ENCODE measurements at regions of chr18 and their contacts with region 1.

Region 1: DNA sequence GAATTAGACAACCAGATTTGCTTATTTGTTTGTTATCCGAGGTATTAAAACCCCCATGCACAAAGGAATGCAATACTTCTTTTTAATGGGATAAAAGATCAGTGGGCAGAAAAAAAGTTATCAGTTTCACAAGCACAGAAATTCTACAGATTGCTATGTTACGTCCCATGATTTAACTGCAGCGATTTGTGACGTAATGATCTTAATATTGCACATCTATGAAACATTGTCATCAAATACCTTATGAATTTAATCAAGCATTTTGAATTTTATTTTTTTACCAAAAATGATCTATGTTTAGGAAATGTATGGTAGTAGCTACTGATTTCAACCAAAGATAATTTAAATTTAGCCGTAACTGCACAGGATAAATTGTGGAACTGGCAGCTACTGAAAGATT is 138.9 kb downstream of the FHOD3 start:
- DNase-seq: no peak
- H3K4me3 ChIP-seq: no peak overlapping the region
- CTCF ChIP-seq: no peak

Region 2: DNA sequence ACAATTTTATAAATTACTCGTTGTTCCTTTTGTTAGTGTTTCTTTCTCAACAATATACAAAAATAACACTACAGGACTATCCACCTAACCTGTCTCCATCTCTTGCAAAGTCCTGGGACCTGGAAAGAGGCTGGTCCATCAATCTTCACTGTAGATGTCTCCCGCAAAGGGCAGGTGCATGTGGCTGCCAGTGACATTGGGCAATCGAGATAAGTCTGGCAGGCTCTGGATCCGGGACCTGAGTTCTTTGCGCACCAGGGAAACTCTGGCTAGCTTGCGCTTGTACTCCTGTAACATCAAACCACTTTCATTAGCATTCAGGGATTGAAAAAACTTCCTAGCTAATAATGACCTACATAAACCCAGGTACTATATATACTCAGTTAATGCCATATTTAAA is 443.4 kb before region 1 on chr18:
- CTCF ChIA-PET with region 1: no interaction called
- POLR2A ChIA-PET with region 1: no interaction called
- DNase-seq: no peak
- H3K4me3 ChIP-seq: no peak overlapping the region
- CTCF ChIP-seq: no peak

Region 3: DNA sequence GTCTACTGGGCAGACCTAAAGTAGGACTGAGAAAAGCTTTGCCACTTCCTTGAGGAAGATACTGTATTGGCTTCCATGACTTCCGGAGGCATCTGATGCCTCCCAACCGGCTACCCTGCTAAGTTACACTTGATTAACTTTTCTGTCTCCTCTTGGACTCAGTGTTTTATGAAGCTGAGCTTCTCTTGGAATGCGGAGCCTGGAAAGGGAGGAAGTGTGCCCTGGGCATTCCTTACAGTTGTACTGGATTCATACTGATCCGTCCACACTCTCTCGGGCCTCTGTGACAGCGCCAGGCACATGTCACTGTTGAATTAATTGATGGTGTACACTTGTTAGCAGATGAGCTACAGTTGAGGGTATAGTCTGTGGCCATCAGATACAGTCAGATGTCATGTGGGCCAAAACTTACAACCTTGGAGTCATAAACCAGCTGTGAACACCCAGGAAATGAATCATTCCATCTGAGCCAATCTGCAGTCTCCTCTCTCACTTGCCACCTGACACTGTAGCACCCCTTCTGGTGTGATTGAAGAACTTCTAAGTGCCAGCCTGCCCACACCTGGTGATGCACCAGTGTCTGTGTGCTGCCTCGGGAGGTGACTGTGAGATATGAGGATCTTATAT is 16.4 kb before region 1 on chr18:
- CTCF ChIA-PET with region 1: interaction called, 10 read pairs
- POLR2A ChIA-PET with region 1: no interaction called
- DNase-seq: no peak
- H3K4me3 ChIP-seq: no peak overlapping the region
- CTCF ChIP-seq: no peak

Region 4: GRCh38 chr18:36693931-36694620 is 257.7 kb after region 1 on chr18:
- CTCF ChIA-PET with region 1: no interaction called
- POLR2A ChIA-PET with region 1: no interaction called
- DNase-seq: no peak
- H3K4me3 ChIP-seq: peak overlapping the region; percentile 56
- CTCF ChIP-seq: no peak

Region 5: GRCh38 chr18:37065254-37065653 is 628.9 kb after region 1 on chr18:
- CTCF ChIA-PET with region 1: no interaction called
- POLR2A ChIA-PET with region 1: no interaction called
- DNase-seq: no peak
- H3K4me3 ChIP-seq: no peak overlapping the region
- CTCF ChIP-seq: no peak